Caco-2 (cell line): ENCODE measurements at regions of chr11 and their contacts with region 1.

Region 1: DNA sequence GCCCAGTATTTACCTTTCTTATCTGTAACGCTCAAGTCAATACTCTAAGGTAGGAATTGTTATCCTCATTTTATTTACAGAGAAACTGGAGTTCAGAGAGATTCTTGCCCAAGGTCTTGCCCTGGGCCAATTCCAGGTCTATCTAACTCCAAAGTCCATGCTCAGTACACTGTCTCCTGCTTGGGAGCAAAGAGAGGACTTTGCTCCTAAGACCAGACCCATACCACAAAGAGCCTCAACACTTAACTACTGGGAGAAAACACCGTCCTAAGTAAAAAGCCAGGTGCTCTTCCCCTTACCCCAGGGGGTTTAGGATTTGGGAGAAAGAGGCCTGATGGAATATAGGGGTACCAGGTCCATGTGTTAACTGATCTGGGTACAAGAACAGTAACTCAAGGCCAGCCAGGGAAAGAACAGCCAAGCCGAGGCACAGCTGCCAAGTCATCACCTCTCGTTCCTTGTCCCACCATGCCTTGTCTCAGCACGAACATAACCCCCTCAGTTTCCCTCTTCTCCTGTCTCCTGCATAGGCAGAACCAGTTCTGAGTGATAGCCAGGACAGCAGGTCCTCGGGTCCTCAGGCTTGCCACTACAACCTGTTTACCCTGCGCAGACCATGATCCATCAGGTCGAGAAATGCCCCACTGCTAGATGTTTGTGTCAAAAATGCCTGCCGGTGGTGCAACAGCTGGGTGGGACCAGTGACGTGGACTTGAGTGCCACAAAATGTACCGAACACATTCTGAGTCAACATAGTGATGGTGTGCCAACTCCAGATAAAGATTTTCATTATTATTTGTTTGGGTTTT is 14.5 kb downstream of the APOA4 start:
- DNase-seq: peak; percentile 94 to 96
- H3K4me3 ChIP-seq: 0 out of 2 replicates have a peak overlapping the region, but pooled peaks have one; percentile 4
- H3K4me3 Mint-ChIP-seq: peak overlapping the region; percentile 67
- H3K27ac Mint-ChIP-seq: peak overlapping the region; percentile 98
- H3K4me1 ChIP-seq: peaks cover 70% of the 10 kb centered on the region
- H3K4me1 Mint-ChIP-seq: peaks cover 69% of the 10 kb centered on the region
- H3K27me3 ChIP-seq: no peaks in the 10 kb centered on the region
- H3K27me3 Mint-ChIP-seq: no peaks in the 10 kb centered on the region
- CTCF ChIP-seq: no peak

Region 2: GRCh38 chr11:116787786-116788486 is 20.7 kb before region 1 on chr11 and contains the start of gene ZPR1:
- CTCF ChIA-PET with region 1: interaction called, 12 read pairs
- POLR2A ChIA-PET with region 1: interaction called, 7 read pairs
- intact Hi-C with region 1: loop called (anchors 1 kb)
- DNase-seq: peak; percentile 84 to 90
- H3K4me3 ChIP-seq: peak within 1 kb of the TSS; percentile 80
- H3K4me3 Mint-ChIP-seq: peak within 1 kb of the TSS; percentile 80
- H3K27ac Mint-ChIP-seq: peak within 1 kb of the TSS; percentile 94
- H3K4me1 ChIP-seq: peaks cover 46% of the 10 kb centered on the region
- H3K4me1 Mint-ChIP-seq: peaks cover 42% of the 10 kb centered on the region
- H3K27me3 ChIP-seq: no peaks in the 10 kb centered on the region
- H3K27me3 Mint-ChIP-seq: no peaks in the 10 kb centered on the region
- CTCF ChIP-seq: no peak
- total RNA-seq, gene ZPR1: 168 and 194 TPM in 2 replicates

Region 3: GRCh38 chr11:116792869-116793771 is 15.5 kb before region 1 on chr11:
- CTCF ChIA-PET with region 1: interaction called, 12 read pairs
- POLR2A ChIA-PET with region 1: interaction called, 7 read pairs
- intact Hi-C with region 1: loop called (anchors 1 kb)
- DNase-seq: no peak
- H3K4me3 ChIP-seq: no peak overlapping the region
- H3K4me3 Mint-ChIP-seq: peak overlapping the region; percentile 1
- H3K27ac Mint-ChIP-seq: peak overlapping the region; percentile 26
- H3K4me1 ChIP-seq: peaks cover 53% of the 10 kb centered on the region
- H3K4me1 Mint-ChIP-seq: peaks cover 33% of the 10 kb centered on the region
- H3K27me3 ChIP-seq: no peaks in the 10 kb centered on the region
- H3K27me3 Mint-ChIP-seq: no peaks in the 10 kb centered on the region
- CTCF ChIP-seq: no peak

Region 4: GRCh38 chr11:116829525-116830183 is 21.1 kb after region 1 on chr11 and contains the start of gene APOC3:
- CTCF ChIA-PET with region 1: interaction called, 29 read pairs
- POLR2A ChIA-PET with region 1: interaction called, 11 read pairs
- intact Hi-C with region 1: loop called (anchors 1 kb)
- DNase-seq: peak; percentile 93 to 96
- H3K4me3 ChIP-seq: peak within 1 kb of the TSS; percentile 3; the same call in 1 of the 2 replicates
- H3K4me3 Mint-ChIP-seq: peak within 1 kb of the TSS; percentile 50
- H3K27ac Mint-ChIP-seq: peak within 1 kb of the TSS; percentile 89
- H3K4me1 ChIP-seq: peaks cover 84% of the 10 kb centered on the region
- H3K4me1 Mint-ChIP-seq: peaks cover 49% of the 10 kb centered on the region
- H3K27me3 ChIP-seq: no peaks in the 10 kb centered on the region
- H3K27me3 Mint-ChIP-seq: no peaks in the 10 kb centered on the region
- CTCF ChIP-seq: no peak
- total RNA-seq, gene APOC3: 103 and 128 TPM in 2 replicates

Region 5: DNA sequence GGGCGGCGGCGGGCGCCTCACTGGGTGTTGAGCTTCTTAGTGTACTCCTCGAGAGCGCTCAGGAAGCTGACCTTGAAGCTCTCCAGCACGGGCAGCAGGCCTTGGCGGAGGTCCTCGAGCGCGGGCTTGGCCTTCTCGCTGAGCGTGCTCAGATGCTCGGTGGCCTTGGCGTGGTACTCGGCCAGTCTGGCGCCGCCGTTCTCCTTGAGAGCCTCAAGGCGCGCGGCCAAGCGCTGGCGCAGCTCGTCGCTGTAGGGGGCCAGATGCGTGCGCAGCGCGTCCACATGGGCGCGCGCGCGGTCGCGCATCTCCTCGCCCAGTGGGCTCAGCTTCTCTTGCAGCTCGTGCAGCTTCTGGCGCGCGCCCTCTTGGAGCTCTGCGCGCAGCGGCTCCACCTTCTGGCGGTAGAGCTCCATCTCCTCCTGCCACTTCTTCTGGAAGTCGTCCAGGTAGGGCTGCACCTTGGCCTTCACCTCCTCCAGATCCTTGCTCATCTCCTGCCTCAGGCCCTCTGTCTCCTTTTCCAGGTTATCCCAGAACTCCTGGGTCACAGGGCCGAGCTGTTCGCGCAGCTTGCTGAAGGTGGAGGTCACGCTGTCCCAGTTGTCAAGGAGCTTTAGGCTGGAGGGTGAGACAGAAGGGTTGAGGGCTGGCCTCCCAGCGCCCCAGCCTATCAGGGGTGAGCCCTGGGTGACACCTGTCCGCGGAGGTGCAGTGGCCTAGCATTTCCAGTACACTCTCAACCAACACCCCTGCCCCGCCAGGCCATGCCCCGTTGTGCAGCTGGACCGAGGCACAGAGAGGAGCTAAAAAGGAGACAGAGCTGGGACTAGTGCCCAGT is 27.4 kb after region 1 on chr11:
- CTCF ChIA-PET with region 1: interaction called, 18 read pairs
- POLR2A ChIA-PET with region 1: interaction called, 5 read pairs
- intact Hi-C with region 1: loop called (anchors 2 kb)
- DNase-seq: peak; percentile 69 to 77
- H3K4me3 ChIP-seq: peak overlapping the region; percentile 40
- H3K4me3 Mint-ChIP-seq: peak overlapping the region; percentile 68
- H3K27ac Mint-ChIP-seq: peak overlapping the region; percentile 92
- H3K4me1 ChIP-seq: peaks cover 86% of the 10 kb centered on the region
- H3K4me1 Mint-ChIP-seq: peaks cover 65% of the 10 kb centered on the region
- H3K27me3 ChIP-seq: no peaks in the 10 kb centered on the region
- H3K27me3 Mint-ChIP-seq: no peaks in the 10 kb centered on the region
- CTCF ChIP-seq: peak; percentile 51

Region 6: DNA sequence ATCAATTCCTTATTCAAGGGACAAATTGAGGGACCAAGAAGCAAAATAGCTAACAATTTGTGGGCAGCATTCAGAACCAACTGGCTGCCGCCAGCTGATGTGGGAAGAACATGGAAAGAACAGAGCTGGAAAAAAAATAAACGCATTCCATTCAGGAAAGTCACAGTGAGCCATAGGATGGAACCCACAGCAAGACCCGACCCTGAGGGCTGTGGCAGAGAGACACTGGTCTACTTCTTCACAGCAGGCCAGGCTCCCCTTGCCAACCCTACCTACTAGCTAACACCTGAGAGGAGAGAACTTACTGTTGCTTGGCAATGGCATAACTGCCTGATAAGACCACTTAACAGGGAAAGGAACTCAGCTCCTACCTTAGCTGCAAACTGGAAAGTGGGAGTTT is 152.3 kb after region 1 on chr11:
- CTCF ChIA-PET with region 1: no interaction called
- POLR2A ChIA-PET with region 1: no interaction called
- intact Hi-C with region 1: no loop called
- DNase-seq: no peak
- H3K4me3 ChIP-seq: no peak overlapping the region
- H3K4me3 Mint-ChIP-seq: no peak overlapping the region
- H3K27ac Mint-ChIP-seq: no peak overlapping the region
- H3K4me1 ChIP-seq: peaks cover 11% of the 10 kb centered on the region; the same call in 1 of the 2 replicates
- H3K4me1 Mint-ChIP-seq: peaks cover 23% of the 10 kb centered on the region
- H3K27me3 ChIP-seq: no peaks in the 10 kb centered on the region
- H3K27me3 Mint-ChIP-seq: no peaks in the 10 kb centered on the region
- CTCF ChIP-seq: no peak

Region 7: DNA sequence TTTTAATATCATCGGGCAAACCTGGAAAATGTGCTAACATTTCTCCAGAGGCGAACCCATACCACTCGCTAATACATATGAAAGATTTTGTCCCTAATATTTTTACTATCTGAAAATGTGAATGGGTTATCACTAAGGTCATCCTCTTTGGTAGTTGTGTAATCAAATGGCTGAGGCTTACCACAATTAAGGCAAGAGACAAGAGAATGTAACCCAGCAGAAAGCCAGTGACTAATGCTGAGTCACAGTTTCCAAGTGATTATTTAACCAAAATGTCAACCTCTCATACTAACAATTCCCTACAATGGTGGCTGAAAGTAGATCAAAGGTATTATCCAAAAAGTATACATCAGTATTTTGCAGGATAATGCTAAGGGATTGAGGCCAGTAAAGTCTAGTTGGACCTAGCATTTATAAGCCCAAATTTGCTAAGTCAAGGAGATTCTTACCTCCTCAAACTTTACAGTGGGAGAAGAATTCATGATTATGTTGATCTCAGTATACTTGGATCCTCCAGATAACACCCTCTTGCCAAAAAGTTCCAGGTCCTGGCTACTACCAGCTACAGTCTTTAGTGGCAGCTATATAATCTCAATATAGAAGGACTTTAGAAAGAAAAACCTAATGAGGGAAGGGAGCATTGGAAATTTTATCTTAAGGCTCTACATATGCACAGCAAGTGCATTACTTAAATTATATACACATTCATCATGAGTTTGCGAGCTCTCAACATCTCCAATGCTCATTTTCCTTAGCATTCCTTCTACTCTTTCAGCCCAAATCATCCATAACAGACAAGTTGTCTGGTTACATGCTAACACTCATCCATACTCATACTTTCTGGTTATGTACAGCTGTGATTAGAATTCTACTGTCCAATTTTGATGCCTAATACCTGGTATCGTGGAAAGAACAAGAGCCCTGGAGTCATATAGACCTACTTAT is 264.2 kb after region 1 on chr11:
- CTCF ChIA-PET with region 1: no interaction called
- POLR2A ChIA-PET with region 1: no interaction called
- intact Hi-C with region 1: loop called (anchors 1 kb)
- DNase-seq: peak in 1 of 2 experiments; percentile 78
- H3K4me3 ChIP-seq: no peak overlapping the region
- H3K4me3 Mint-ChIP-seq: no peak overlapping the region
- H3K27ac Mint-ChIP-seq: peak overlapping the region; percentile 28
- H3K4me1 ChIP-seq: peaks cover 68% of the 10 kb centered on the region
- H3K4me1 Mint-ChIP-seq: peaks cover 57% of the 10 kb centered on the region
- H3K27me3 ChIP-seq: no peaks in the 10 kb centered on the region
- H3K27me3 Mint-ChIP-seq: no peaks in the 10 kb centered on the region
- CTCF ChIP-seq: no peak